ENCODE measurements at regions of chr11 and their contacts with region 1.

Region 1: GRCh38 chr11:123020968-123021367 is 39.3 kb upstream of the BSX start:
- DNase-seq: no peak
- ATAC-seq: peak; percentile 95
- H3K4me3 ChIP-seq: no peak overlapping the region
- H3K27ac ChIP-seq: no peak overlapping the region
- H3K4me1 ChIP-seq: peaks cover 5% of the 10 kb centered on the region; the same call in 1 of the 2 replicates
- H3K27me3 ChIP-seq: no peaks in the 10 kb centered on the region
- CTCF ChIP-seq: peak; percentile 68 to 78 (median 73)
- EP300 ChIP-seq: no peak
- POLR2A ChIP-seq: no peak
- RAD21 ChIP-seq: peak; percentile 81

Region 2: DNA sequence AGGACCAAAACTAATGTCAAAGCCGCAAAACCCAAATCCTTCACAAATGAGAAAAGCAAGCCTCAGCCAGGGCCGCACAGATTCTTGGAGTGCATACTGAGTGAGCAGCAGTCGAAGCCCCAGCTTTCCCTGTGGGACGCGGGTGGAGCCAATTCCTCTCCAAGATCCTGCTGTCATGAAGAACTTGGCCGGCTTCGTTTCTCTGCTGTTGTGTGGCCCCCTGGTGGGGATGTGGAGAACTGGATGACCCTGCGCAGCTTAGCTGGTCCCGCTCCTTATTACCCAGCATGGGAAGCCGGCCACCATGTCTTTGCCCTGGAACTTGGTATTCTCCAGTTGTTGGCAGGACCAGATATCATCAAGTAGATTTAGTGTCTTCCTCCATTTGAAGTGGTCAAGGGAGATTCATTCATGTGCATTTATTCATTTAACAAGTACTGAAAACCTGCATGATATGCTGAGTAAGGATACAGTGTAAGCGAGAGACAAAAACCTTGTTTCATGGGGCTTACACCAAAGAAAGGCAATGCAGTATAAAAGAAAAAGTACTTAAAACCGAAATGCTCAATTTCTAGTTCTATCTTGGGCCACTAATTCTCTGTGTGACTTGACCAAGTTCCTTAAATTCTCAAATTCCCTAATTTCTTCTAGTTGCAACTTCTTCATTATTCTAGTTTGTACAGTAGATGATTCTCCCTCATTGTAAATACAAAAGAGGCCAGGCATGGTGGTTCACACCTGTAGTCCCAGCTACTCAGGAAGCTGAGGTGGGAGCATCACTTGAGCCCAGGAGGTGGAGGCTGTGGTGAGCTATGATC is 239.4 kb before region 1 on chr11:
- CTCF ChIA-PET with region 1: interaction called, 5 read pairs
- POLR2A ChIA-PET with region 1: no interaction called
- RAD21 ChIA-PET with region 1: interaction called, 3 read pairs
- SMC1A ChIA-PET with region 1: no interaction called
- in situ Hi-C with region 1: no loop called
- intact Hi-C with region 1: loop called (anchors 5 kb)
- DNase-seq: no peak
- ATAC-seq: peak; percentile 96
- H3K4me3 ChIP-seq: no peak overlapping the region
- H3K27ac ChIP-seq: no peak overlapping the region
- H3K4me1 ChIP-seq: no peaks in the 10 kb centered on the region
- H3K27me3 ChIP-seq: no peaks in the 10 kb centered on the region; a peak in 1 of 4 replicates
- CTCF ChIP-seq: peak; percentile 84 to 91 (median 85)
- EP300 ChIP-seq: no peak
- POLR2A ChIP-seq: no peak
- RAD21 ChIP-seq: peak; percentile 87

Region 3: GRCh38 chr11:122814401-122814800 is 206.6 kb before region 1 on chr11:
- CTCF ChIA-PET with region 1: interaction called, 8 read pairs
- POLR2A ChIA-PET with region 1: no interaction called
- RAD21 ChIA-PET with region 1: interaction called, 11 read pairs
- SMC1A ChIA-PET with region 1: interaction called, 11 read pairs
- in situ Hi-C with region 1: no loop called
- intact Hi-C with region 1: no loop called
- DNase-seq: no peak
- ATAC-seq: peak; percentile 93
- H3K4me3 ChIP-seq: no peak overlapping the region
- H3K27ac ChIP-seq: no peak overlapping the region
- H3K4me1 ChIP-seq: no peaks in the 10 kb centered on the region; the same call in 1 of the 2 replicates
- H3K27me3 ChIP-seq: no peaks in the 10 kb centered on the region
- CTCF ChIP-seq: peak; percentile 22 to 51 (median 28); a peak in 3 of 6 replicates
- EP300 ChIP-seq: no peak
- POLR2A ChIP-seq: no peak
- RAD21 ChIP-seq: peak; percentile 60

Region 4: GRCh38 chr11:122869622-122870021 is 151.3 kb before region 1 on chr11:
- CTCF ChIA-PET with region 1: interaction called, 869 read pairs
- POLR2A ChIA-PET with region 1: interaction called, 9 read pairs
- RAD21 ChIA-PET with region 1: interaction called, 213 read pairs
- SMC1A ChIA-PET with region 1: interaction called, 258 read pairs
- in situ Hi-C with region 1: loop called (anchors 5 kb)
- intact Hi-C with region 1: no loop called
- DNase-seq: no peak
- ATAC-seq: peak; percentile 62
- H3K4me3 ChIP-seq: no peak overlapping the region
- H3K27ac ChIP-seq: no peak overlapping the region
- H3K4me1 ChIP-seq: no peaks in the 10 kb centered on the region; the same call in 1 of the 2 replicates
- H3K27me3 ChIP-seq: no peaks in the 10 kb centered on the region
- CTCF ChIP-seq: no peak
- EP300 ChIP-seq: no peak
- POLR2A ChIP-seq: no peak
- RAD21 ChIP-seq: no peak

Region 5: DNA sequence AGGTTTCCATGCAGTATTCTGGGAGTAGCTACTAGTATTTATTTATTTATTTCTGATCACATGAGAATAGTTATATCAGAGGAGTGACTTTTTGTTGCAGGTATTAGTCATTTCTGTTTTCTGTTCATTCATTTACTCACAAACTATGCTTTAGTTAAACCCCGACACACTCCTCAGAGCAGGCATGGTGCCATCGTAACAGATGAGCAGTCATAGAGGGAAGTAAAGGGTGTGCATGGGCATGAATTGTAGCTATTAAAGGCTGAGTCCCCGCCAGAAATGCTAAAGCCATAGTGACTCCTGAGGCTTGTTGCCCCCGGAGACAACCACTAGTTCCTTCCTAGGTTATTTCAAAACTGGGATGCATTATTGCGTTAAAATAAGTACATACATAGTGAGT is 127.8 kb before region 1 on chr11:
- CTCF ChIA-PET with region 1: interaction called, 12 read pairs
- POLR2A ChIA-PET with region 1: no interaction called
- RAD21 ChIA-PET with region 1: interaction called, 5 read pairs
- SMC1A ChIA-PET with region 1: interaction called, 3 read pairs
- in situ Hi-C with region 1: no loop called
- intact Hi-C with region 1: no loop called
- DNase-seq: no peak
- ATAC-seq: peak; percentile 90
- H3K4me3 ChIP-seq: no peak overlapping the region
- H3K27ac ChIP-seq: no peak overlapping the region
- H3K4me1 ChIP-seq: no peaks in the 10 kb centered on the region
- H3K27me3 ChIP-seq: no peaks in the 10 kb centered on the region
- CTCF ChIP-seq: no peak
- EP300 ChIP-seq: no peak
- POLR2A ChIP-seq: no peak
- RAD21 ChIP-seq: no peak

Region 6: DNA sequence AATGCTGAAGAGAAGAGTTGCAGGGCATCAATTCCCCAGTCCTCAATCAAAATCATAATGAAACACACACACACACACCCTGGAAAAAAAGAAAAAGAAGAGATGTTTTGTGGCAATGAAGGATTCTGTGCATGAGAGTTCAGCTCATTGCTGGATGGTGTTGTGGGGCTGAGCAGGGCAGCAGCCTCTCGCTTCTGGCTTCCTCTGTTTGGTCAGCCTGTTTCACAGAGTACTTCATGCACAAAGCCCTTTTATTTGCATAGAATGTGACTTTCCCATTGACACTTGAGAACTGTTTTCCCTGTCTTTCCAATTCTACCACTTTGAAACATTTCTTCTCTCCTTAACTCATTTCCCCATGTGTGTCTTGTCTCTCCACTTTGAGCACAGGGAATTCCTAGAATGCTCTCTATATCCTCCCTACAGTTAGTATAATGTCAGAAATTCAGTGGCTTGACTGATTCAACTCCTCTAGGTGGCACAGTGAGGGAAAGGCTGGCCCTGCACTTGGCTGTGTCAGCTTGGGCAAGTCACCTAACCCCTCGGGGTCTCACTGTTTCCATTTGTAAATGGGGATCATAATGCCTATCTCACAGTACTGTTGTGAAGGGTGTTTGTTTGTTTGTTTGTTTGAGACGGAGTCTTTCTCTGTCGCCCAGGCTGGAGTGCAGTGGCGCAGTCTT is 14.0 kb before region 1 on chr11:
- CTCF ChIA-PET with region 1: interaction called, 34 read pairs
- POLR2A ChIA-PET with region 1: no interaction called
- RAD21 ChIA-PET with region 1: interaction called, 3 read pairs
- SMC1A ChIA-PET with region 1: interaction called, 8 read pairs
- in situ Hi-C with region 1: no loop called
- intact Hi-C with region 1: no loop called
- DNase-seq: no peak
- ATAC-seq: peak; percentile 47; the same call in 2 of the 3 replicates
- H3K4me3 ChIP-seq: no peak overlapping the region
- H3K27ac ChIP-seq: no peak overlapping the region
- H3K4me1 ChIP-seq: no peaks in the 10 kb centered on the region
- H3K27me3 ChIP-seq: peaks cover 0 to 2% of the 10 kb centered on the region in 2 experiments; a peak in 1 of 4 replicates
- CTCF ChIP-seq: no peak
- EP300 ChIP-seq: no peak
- POLR2A ChIP-seq: no peak
- RAD21 ChIP-seq: no peak

Region 7: GRCh38 chr11:123054301-123055065 is 33.5 kb after region 1 on chr11:
- CTCF ChIA-PET with region 1: interaction called, 118 read pairs
- POLR2A ChIA-PET with region 1: interaction called, 9 read pairs
- RAD21 ChIA-PET with region 1: interaction called, 92 read pairs
- SMC1A ChIA-PET with region 1: interaction called, 119 read pairs
- in situ Hi-C with region 1: no loop called
- intact Hi-C with region 1: no loop called
- DNase-seq: no peak
- ATAC-seq: peak; percentile 87
- H3K4me3 ChIP-seq: no peak overlapping the region
- H3K27ac ChIP-seq: no peak overlapping the region
- H3K4me1 ChIP-seq: no peaks in the 10 kb centered on the region; the same call in 1 of the 2 replicates
- H3K27me3 ChIP-seq: no peaks in the 10 kb centered on the region
- CTCF ChIP-seq: peak; percentile 61 to 74 (median 63)
- EP300 ChIP-seq: no peak
- POLR2A ChIP-seq: no peak
- RAD21 ChIP-seq: peak; percentile 58

Measured in GM12878 (cell line).